CD8-positive, alpha-beta memory T cell (primary cell): ENCODE measurements at regions of chr2 and their contacts with region 1.

Region 1: DNA sequence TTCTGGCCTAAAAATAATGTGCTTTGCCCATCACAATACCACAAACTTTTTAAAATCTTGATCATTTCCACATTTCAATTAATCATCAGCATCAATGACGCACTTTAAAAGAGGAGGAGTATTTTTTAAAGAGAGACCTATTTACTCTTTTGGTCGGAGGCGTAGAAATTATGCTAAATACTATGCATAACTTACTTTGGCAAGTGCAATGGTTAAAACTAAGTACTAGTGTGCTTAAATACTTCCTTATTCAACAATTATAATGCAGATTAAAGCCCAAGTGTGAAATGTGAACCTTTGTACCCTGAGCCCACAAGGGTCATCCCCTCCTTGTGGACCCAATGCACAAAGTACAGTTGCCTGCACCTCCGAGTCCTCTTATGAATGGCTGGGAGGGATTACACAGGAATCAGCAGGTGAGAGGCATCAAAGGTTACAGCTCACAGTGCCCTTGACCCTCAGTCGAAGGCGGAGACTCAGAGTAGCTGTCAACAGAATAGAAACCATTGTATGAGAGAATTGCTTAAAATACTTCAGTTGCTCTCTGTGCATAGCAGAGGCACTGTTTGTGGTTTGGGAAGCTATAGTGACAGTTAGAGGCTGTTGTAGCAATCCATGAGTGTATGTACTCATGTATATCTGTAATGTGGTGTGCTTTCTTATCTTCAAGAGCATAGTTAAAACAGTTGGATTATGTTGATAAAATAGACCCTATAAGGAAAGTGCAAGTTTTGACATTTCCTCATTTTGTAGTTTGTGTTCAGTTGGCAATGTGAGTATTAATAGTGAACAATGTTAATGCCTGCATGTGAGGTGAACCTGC is 151.7 kb upstream of the ITGA4 start:
- DNase-seq: peak in 4 of 5 donors; percentile 6 to 76 (median 46)
- H3K4me3 ChIP-seq: peak overlapping the region; percentile 1
- H3K4me3 Mint-ChIP-seq: peak overlapping the region; percentile 4 to 78 (median 68)
- H3K27ac ChIP-seq: peak overlapping the region; percentile 45
- H3K27ac Mint-ChIP-seq: peak overlapping the region; percentile 92 to 99 (median 96)
- H3K4me1 ChIP-seq: peaks cover 70% of the 10 kb centered on the region
- H3K4me1 Mint-ChIP-seq: peaks cover 82 to 89% (median 88%) of the 10 kb centered on the region in 3 donors
- H3K27me3 ChIP-seq: no peaks in the 10 kb centered on the region
- H3K27me3 Mint-ChIP-seq: no peaks in the 10 kb centered on the region

Region 2: GRCh38 chr2:181275643-181276070 is 29.9 kb before region 1 on chr2:
- CTCF ChIA-PET with region 1: interaction called, 3 read pairs
- POLR2A ChIA-PET with region 1: interaction called, 11 read pairs
- DNase-seq: peak in 4 of 5 donors; percentile 2 to 61 (median 50)
- H3K4me3 ChIP-seq: no peak overlapping the region
- H3K4me3 Mint-ChIP-seq: peak overlapping the region in 5 of 7 donors; percentile 34 to 63 (median 43)
- H3K27ac ChIP-seq: no peak overlapping the region
- H3K27ac Mint-ChIP-seq: peak overlapping the region; percentile 75 to 93 (median 90)
- H3K4me1 ChIP-seq: peaks cover 25% of the 10 kb centered on the region
- H3K4me1 Mint-ChIP-seq: peaks cover 50 to 75% (median 60%) of the 10 kb centered on the region in 3 donors
- H3K27me3 ChIP-seq: no peaks in the 10 kb centered on the region
- H3K27me3 Mint-ChIP-seq: no peaks in the 10 kb centered on the region

Region 3: GRCh38 chr2:181319286-181319685 is 13.8 kb after region 1 on chr2:
- CTCF ChIA-PET with region 1: interaction called, 10 read pairs
- POLR2A ChIA-PET with region 1: no interaction called
- DNase-seq: no peak
- H3K4me3 ChIP-seq: no peak overlapping the region
- H3K4me3 Mint-ChIP-seq: no peak overlapping the region
- H3K27ac ChIP-seq: no peak overlapping the region
- H3K27ac Mint-ChIP-seq: no peak overlapping the region
- H3K4me1 ChIP-seq: no peaks in the 10 kb centered on the region
- H3K4me1 Mint-ChIP-seq: peaks cover 15 to 49% (median 16%) of the 10 kb centered on the region in 3 donors
- H3K27me3 ChIP-seq: no peaks in the 10 kb centered on the region
- H3K27me3 Mint-ChIP-seq: no peaks in the 10 kb centered on the region

Region 4: DNA sequence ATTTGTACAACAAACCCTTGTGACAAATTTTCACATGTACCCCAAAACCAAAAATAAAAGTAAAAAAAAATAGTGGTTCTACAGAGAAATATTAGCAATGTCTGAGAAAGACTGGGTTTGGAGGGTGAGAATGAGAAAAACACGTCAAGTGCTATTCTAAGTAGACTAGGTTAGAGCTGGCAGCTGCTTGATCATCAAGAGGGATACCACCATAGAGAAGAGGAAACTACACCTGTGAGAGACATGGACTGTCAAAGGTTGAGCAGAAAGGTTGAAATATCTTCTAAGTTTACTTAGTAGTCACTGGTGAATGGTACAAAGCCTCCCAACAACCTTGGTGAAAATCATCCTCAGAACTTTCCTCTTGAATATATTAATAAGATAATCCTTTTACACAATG is 24.8 kb after region 1 on chr2:
- CTCF ChIA-PET with region 1: no interaction called
- POLR2A ChIA-PET with region 1: no interaction called
- DNase-seq: no peak
- H3K4me3 ChIP-seq: no peak overlapping the region
- H3K4me3 Mint-ChIP-seq: no peak overlapping the region
- H3K27ac ChIP-seq: no peak overlapping the region
- H3K27ac Mint-ChIP-seq: no peak overlapping the region
- H3K4me1 ChIP-seq: peaks cover 6% of the 10 kb centered on the region
- H3K4me1 Mint-ChIP-seq: peaks cover 9 to 56% (median 21%) of the 10 kb centered on the region in 3 donors
- H3K27me3 ChIP-seq: no peaks in the 10 kb centered on the region
- H3K27me3 Mint-ChIP-seq: no peaks in the 10 kb centered on the region